ENCODE measurements at regions of chr2 and their contacts with region 1.

Region 1: DNA sequence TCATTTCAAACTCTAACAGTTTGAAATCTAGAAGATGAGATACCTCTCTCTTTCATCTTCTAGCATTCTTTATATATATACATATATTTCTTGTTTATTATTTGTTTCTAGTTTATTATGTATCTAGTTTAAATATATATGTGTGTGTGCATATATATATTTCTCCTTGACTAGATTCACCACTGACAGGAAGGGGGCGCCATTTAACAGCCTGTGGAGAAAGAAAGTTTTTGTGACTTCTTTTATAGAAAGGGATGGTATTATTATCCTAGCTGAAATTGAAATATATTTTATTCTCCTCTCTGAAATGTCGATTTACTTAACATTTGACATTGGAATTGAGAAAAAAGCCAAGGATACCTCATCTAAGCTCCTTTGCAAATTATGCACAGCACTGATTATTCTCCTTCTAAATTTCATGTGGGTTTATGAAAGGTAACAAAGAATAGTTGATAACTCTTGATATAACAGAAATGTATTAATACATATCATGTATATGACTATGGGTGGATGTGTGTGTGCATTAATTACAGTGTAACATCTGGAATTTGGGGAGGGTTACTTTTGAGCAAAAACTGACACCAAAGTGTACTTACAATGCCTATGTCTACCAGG is 160.7 kb upstream of the NT5C1B start:
- DNase-seq: no peak
- ATAC-seq: no peak
- H3K4me3 ChIP-seq: no peak overlapping the region
- H3K27ac ChIP-seq: no peak overlapping the region
- H3K4me1 ChIP-seq: 0 out of 2 replicates have a peak, but pooled peaks cover 9% of the 10 kb centered on the region
- H3K27me3 ChIP-seq: no peaks in the 10 kb centered on the region
- CTCF ChIP-seq: peak; percentile 75; the same call in 1 of the 2 replicates

Region 2: GRCh38 chr2:17257189-17257909 is 1492.7 kb before region 1 on chr2:
- CTCF ChIA-PET with region 1: no interaction called
- POLR2A ChIA-PET with region 1: no interaction called
- in situ Hi-C with region 1: no loop called
- intact Hi-C with region 1: no loop called
- DNase-seq: no peak
- ATAC-seq: no peak
- H3K4me3 ChIP-seq: no peak overlapping the region
- H3K27ac ChIP-seq: no peak overlapping the region
- H3K4me1 ChIP-seq: no peaks in the 10 kb centered on the region
- H3K27me3 ChIP-seq: no peaks in the 10 kb centered on the region
- CTCF ChIP-seq: no peak

Region 3: DNA sequence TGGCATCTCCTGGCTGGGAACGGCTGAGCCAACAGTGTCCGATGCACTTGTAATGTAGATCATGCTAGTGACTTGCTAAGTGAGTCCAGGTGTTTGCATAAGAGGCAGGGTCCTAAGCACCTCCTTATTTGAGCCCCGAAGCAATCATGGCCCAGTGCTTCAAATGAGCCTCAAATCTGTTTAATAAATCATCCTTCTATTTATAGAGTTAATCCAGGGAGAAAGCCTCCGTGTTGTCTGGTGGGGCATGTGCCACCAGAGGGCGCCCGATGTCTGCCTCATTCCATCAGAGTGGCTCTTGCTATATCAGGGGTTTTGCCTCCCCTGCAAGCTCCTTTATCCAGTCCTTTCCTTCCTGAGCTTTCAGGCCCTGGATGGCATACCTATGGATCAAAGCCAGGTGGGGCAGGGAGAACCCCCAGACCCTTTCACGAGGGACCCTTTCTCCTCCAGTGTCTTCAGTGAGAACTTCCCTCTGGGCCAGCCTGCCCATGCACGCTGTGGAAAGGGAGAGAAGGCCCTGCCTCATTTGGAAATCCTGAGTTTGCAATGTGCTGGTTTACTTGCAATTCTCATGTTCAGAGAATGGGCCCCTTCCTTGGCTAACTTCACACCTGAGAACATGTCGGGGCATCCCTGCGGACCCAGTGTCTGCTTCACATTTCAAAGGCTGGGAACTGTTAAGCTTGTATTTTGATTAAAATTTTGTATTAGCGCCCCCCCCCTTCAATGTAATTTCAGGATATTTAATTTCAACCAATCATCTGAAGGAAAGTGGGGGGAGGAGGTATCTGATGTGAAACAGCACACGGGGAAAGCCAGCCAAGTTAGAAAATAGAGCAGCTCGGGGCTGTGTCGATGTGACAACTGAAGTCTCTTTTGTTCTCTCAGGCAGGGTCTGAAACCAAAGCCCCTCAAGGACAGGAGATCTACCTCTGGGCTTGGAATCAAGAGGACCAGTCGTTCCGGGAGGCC is 229.3 kb before region 1 on chr2:
- CTCF ChIA-PET with region 1: no interaction called
- POLR2A ChIA-PET with region 1: no interaction called
- in situ Hi-C with region 1: no loop called
- intact Hi-C with region 1: loop called (anchors 5 kb)
- DNase-seq: peak; percentile 50
- ATAC-seq: peak; percentile 95
- H3K4me3 ChIP-seq: no peak overlapping the region; a peak in 1 of 4 replicates
- H3K27ac ChIP-seq: no peak overlapping the region
- H3K4me1 ChIP-seq: peaks cover 3% of the 10 kb centered on the region; the same call in 1 of the 2 replicates
- H3K27me3 ChIP-seq: no peaks in the 10 kb centered on the region; the same call in 1 of the 2 replicates
- CTCF ChIP-seq: peak; percentile 95

Region 4: GRCh38 chr2:18777250-18777812 is 27.3 kb after region 1 on chr2:
- CTCF ChIA-PET with region 1: no interaction called
- POLR2A ChIA-PET with region 1: no interaction called
- in situ Hi-C with region 1: no loop called
- intact Hi-C with region 1: no loop called
- DNase-seq: no peak
- ATAC-seq: no peak
- H3K4me3 ChIP-seq: no peak overlapping the region
- H3K27ac ChIP-seq: no peak overlapping the region
- H3K4me1 ChIP-seq: no peaks in the 10 kb centered on the region
- H3K27me3 ChIP-seq: no peaks in the 10 kb centered on the region
- CTCF ChIP-seq: no peak

Region 5: DNA sequence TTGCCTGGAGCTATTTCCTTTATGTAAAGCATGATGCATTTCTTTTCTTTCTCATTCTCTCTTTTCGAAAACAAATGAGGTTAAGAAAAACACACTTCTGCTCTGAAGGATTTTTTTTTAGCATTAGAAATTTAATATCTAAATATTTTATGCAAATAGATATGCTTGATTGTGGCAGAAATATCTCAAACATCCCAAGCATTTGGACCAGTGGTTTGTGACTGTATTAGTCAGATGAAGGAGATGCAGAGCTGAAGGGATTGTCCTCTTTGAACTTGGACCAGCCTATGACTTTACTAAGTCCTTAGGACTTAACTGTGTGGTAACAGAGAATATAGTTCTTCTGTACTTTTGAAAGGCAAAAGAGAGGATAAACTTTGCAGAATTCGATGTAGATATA is 175.3 kb after region 1 on chr2:
- CTCF ChIA-PET with region 1: no interaction called
- POLR2A ChIA-PET with region 1: no interaction called
- in situ Hi-C with region 1: no loop called
- intact Hi-C with region 1: no loop called
- DNase-seq: no peak
- ATAC-seq: no peak
- H3K4me3 ChIP-seq: no peak overlapping the region
- H3K27ac ChIP-seq: no peak overlapping the region
- H3K4me1 ChIP-seq: no peaks in the 10 kb centered on the region
- H3K27me3 ChIP-seq: no peaks in the 10 kb centered on the region
- CTCF ChIP-seq: no peak

Region 6: DNA sequence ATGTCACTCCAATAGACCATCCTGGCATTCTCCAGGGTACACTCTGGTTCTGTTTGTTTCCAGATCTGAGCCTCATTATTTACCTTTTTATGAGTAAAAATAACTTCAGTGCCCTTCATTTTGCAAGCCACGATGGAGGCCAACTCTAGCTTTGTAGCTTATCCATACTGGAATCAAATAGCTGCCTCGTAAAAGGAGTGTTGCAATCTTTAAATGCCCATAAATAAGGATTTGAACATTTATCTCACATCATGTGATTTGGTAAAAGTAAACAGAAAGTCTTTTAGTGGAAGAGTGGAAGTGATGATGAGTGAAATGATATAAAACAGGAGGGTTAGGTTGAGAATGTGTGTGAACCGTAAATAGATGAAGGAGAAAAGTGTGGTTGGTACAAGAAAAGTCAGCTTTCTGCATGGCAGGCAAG is 259.4 kb after region 1 on chr2:
- CTCF ChIA-PET with region 1: no interaction called
- POLR2A ChIA-PET with region 1: no interaction called
- in situ Hi-C with region 1: no loop called
- intact Hi-C with region 1: no loop called
- DNase-seq: no peak
- ATAC-seq: no peak
- H3K4me3 ChIP-seq: no peak overlapping the region
- H3K27ac ChIP-seq: no peak overlapping the region
- H3K4me1 ChIP-seq: no peaks in the 10 kb centered on the region
- H3K27me3 ChIP-seq: no peaks in the 10 kb centered on the region
- CTCF ChIP-seq: no peak

Measured in Panc1 (cell line).